ENCODE measurements at regions of chr5 and their contacts with region 1.

Region 1: GRCh38 chr5:128237546-128237945 is 154.0 kb downstream of the SLC12A2 start:
- DNase-seq: no peak
- H3K4me3 ChIP-seq: no peak overlapping the region
- H3K27me3 ChIP-seq: peaks cover 4% of the 10 kb centered on the region
- CTCF ChIP-seq: no peak

Region 2: GRCh38 chr5:127757576-127757975 is 480.0 kb before region 1 on chr5:
- CTCF ChIA-PET with region 1: no interaction called
- POLR2A ChIA-PET with region 1: interaction called, 10 read pairs
- DNase-seq: no peak
- H3K4me3 ChIP-seq: no peak overlapping the region
- H3K27me3 ChIP-seq: no peaks in the 10 kb centered on the region
- CTCF ChIP-seq: peak; percentile 38

Region 3: DNA sequence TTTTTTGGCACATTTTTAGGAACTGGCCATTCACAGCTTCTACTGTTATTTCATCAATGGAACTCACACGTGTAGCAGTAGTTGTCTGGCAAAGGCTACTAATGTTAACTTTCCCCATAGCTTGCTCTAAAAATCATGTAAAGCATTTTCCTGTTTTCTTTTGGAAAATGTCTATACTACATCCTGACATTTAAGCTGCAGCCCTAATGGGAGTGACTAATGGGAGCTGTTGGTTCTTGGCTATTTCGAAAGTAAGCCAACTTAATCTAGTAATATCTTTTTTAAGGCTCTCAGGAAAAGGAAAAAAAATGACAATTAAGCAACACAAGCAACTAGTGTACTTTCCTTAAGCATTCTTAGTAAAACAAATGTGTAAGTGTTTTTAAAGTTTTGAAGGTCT is 15.2 kb after region 1 on chr5:
- CTCF ChIA-PET with region 1: interaction called, 10 read pairs
- POLR2A ChIA-PET with region 1: no interaction called
- DNase-seq: no peak
- H3K4me3 ChIP-seq: no peak overlapping the region
- H3K27me3 ChIP-seq: no peaks in the 10 kb centered on the region
- CTCF ChIP-seq: no peak